ENCODE measurements at regions of chr10 and their contacts with region 1.

Region 1: GRCh38 chr10:22630234-22631174 is 83.9 kb downstream of the PIP4K2A start:
- DNase-seq: peak; percentile 69
- CTCF ChIP-seq: no peak

Region 2: GRCh38 chr10:22174442-22174841 is 456.1 kb before region 1 on chr10:
- CTCF ChIA-PET with region 1: no interaction called
- POLR2A ChIA-PET with region 1: no interaction called
- DNase-seq: no peak
- CTCF ChIP-seq: no peak

Region 3: GRCh38 chr10:22615819-22616499 is 14.5 kb before region 1 on chr10:
- CTCF ChIA-PET with region 1: interaction called, 32 read pairs
- POLR2A ChIA-PET with region 1: no interaction called
- DNase-seq: peak; percentile 58
- CTCF ChIP-seq: no peak

Region 4: DNA sequence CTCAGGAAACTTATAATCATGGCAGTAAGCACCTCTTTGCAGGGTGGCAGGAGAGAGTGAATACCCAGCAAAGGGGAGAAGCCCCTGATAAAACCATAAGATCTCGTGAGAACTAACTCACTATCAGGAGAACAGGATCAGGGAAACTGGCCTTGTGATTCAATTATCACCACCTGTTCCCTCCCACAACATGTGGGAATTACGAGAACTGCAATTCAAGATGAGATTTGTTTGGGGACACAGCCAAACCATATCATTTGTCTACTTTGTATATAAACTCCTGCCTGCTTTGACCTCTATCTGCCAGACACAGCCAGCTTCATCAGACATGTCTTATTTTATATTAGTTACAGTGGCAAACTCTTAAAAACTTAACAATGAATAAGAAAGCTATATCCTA is 347.8 kb after region 1 on chr10:
- CTCF ChIA-PET with region 1: no interaction called
- POLR2A ChIA-PET with region 1: no interaction called
- DNase-seq: no peak
- CTCF ChIP-seq: no peak